K562 (cell line): ENCODE measurements at regions of chr1 and their contacts with region 1.

Region 1: GRCh38 chr1:113783254-113784099 is 24.2 kb upstream of the PHTF1 start:
- DNase-seq: peak in 2 of 4 experiments; percentile 49 to 62
- ATAC-seq: peak; percentile 79
- H3K4me3 ChIP-seq: no peak overlapping the region
- H3K27ac ChIP-seq: peak overlapping the region; percentile 23; the same call in 1 of the 3 replicates
- H3K4me1 ChIP-seq: peaks cover 15 to 60% of the 10 kb centered on the region in 2 experiments
- H3K27me3 ChIP-seq: no peaks in the 10 kb centered on the region
- CTCF ChIP-seq: no peak
- EP300 ChIP-seq: no peak
- POLR2A ChIP-seq: no peak
- RAD21 ChIP-seq: no peak

Region 2: GRCh38 chr1:113630068-113630975 is 153.2 kb before region 1 on chr1:
- CTCF ChIA-PET with region 1: no interaction called
- POLR2A ChIA-PET with region 1: no interaction called
- in situ Hi-C with region 1: no loop called
- intact Hi-C with region 1: no loop called
- DNase-seq: no peak
- ATAC-seq: no peak; the same call in 2 of the 3 replicates
- H3K4me3 ChIP-seq: no peak overlapping the region
- H3K27ac ChIP-seq: no peak overlapping the region
- H3K4me1 ChIP-seq: no peaks in the 10 kb centered on the region
- H3K27me3 ChIP-seq: no peaks in the 10 kb centered on the region
- CTCF ChIP-seq: no peak
- EP300 ChIP-seq: no peak
- POLR2A ChIP-seq: no peak
- RAD21 ChIP-seq: no peak

Region 3: DNA sequence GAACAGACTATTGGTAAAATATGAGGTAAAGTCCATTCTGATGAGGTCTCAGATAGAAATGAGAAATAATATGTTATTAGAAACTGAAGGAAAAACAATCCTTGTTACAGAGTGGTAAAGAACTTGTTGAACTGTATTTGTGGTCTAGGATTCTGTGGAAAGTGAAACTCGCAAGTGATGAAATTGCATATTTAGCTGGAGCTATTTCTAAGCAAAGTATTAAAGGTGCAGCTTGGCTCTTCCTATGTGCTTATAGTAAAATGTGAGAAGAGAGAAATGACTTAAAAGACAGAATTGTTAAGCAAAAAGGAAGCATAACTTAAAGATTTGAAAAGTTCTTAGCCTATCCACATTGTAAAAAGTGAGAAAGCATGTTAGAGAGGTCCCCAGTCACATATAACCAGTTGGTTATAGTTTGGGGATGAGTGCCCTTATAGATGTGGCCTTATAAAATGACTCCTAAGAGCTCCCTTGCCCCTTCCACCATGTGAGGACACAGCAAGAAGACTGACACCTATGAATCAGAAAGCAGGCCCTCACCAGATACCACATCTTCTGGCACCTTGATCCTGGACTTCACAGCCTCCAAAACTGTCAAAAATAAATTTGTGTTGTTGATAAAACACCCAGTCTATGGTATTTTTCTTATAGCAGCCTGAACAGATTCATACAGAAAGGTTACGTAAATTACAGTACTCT is 49.0 kb before region 1 on chr1:
- CTCF ChIA-PET with region 1: no interaction called
- POLR2A ChIA-PET with region 1: no interaction called
- in situ Hi-C with region 1: no loop called
- intact Hi-C with region 1: no loop called
- DNase-seq: no peak
- ATAC-seq: no peak
- H3K4me3 ChIP-seq: no peak overlapping the region
- H3K27ac ChIP-seq: no peak overlapping the region
- H3K4me1 ChIP-seq: no peaks in the 10 kb centered on the region
- H3K27me3 ChIP-seq: no peaks in the 10 kb centered on the region
- CTCF ChIP-seq: no peak
- EP300 ChIP-seq: no peak
- POLR2A ChIP-seq: no peak
- RAD21 ChIP-seq: no peak

Region 4: DNA sequence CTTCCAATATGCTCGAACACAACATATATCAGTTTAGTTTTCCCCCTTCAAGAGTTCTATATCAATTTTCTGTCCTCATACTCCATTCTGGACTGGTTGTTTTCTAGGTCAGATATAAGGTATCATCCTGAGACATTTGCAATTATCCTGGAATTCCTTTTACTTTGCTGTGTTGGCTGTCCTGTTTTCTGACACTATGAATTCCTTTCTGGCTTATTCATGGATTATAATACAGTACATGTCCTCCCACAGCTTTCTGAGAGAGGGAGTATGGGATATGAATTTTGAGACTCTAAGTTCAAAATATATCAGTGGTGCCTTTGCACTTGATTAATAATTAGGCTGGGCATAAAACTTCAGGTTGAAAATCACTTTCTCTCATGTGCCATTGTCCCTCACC is 36.1 kb before region 1 on chr1:
- CTCF ChIA-PET with region 1: no interaction called
- POLR2A ChIA-PET with region 1: no interaction called
- in situ Hi-C with region 1: no loop called
- intact Hi-C with region 1: no loop called
- DNase-seq: no peak
- ATAC-seq: no peak
- H3K4me3 ChIP-seq: no peak overlapping the region
- H3K27ac ChIP-seq: no peak overlapping the region
- H3K4me1 ChIP-seq: peaks cover 0 to 3% of the 10 kb centered on the region in 2 experiments; a peak in 1 of 5 replicates
- H3K27me3 ChIP-seq: no peaks in the 10 kb centered on the region
- CTCF ChIP-seq: no peak
- EP300 ChIP-seq: no peak
- POLR2A ChIP-seq: no peak
- RAD21 ChIP-seq: no peak

Region 5: DNA sequence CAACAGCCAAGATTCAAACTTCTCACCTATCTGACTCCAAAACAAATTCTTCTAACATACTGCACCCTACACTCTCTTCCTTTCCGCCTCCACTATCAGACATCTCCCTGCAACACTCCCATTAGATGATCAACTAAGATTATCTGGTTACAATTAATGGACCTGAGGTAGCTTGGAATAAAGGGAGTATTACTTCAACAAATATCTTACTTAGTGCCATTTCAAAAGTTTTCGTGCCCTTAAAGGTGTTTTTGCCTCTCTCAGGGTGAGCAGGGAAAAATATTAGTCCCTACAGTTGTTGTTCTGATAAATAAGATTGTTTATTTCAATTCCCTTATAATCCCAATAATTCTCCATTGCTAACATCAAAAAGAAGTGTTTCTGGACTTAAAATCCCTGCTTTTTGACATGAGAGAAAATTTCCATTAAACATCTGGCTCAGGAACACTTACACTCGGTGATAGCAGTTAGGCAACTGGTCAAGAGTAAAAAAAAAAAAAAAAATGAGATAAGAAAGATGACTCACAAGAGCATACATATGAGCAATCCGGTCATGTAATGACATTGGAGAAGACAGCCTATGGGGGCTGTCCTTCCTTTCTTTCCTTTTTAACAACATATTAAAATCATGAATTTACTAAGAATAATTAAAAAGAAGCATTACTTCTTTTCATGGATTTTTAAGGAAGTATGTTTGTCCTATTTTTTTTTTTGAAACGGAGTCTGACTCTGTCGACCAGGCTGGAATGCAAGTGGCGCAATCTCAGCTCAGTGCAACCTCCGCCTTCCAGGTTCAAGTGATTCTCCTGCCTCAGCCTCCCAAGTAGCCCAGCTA is 21.2 kb after region 1 on chr1:
- CTCF ChIA-PET with region 1: interaction called, 4 read pairs
- POLR2A ChIA-PET with region 1: interaction called, 7 read pairs
- in situ Hi-C with region 1: no loop called
- intact Hi-C with region 1: loop called (anchors 2 kb)
- DNase-seq: peak; percentile 77 to 88 (median 82)
- ATAC-seq: peak; percentile 89
- H3K4me3 ChIP-seq: no peak overlapping the region
- H3K27ac ChIP-seq: peak overlapping the region; percentile 53; the same call in 2 of the 3 replicates
- H3K4me1 ChIP-seq: peaks cover 21 to 36% of the 10 kb centered on the region in 2 experiments
- H3K27me3 ChIP-seq: no peaks in the 10 kb centered on the region
- CTCF ChIP-seq: no peak; a peak in 1 of 6 replicates
- EP300 ChIP-seq: peak; percentile 75; the same call in 1 of the 2 replicates
- POLR2A ChIP-seq: no peak
- RAD21 ChIP-seq: no peak